ENCODE measurements at regions of chr11 and their contacts with region 1.

Region 1: GRCh38 chr11:126716456-126717083 is 284.0 kb downstream of the KIRREL3 start:
- DNase-seq: peak; percentile 26
- ATAC-seq: peak; percentile 92
- H3K4me3 ChIP-seq: no peak overlapping the region
- H3K27ac ChIP-seq: no peak overlapping the region
- H3K4me1 ChIP-seq: no peaks in the 10 kb centered on the region
- H3K27me3 ChIP-seq: peaks cover 42% of the 10 kb centered on the region
- CTCF ChIP-seq: peak; percentile 36 to 76 (median 72); a peak in 5 of 6 replicates
- POLR2A ChIP-seq: no peak
- RAD21 ChIP-seq: peak; percentile 66

Region 2: GRCh38 chr11:126655807-126656128 is 60.8 kb before region 1 on chr11:
- CTCF ChIA-PET with region 1: no interaction called
- POLR2A ChIA-PET with region 1: no interaction called
- RAD21 ChIA-PET with region 1: no interaction called
- intact Hi-C with region 1: no loop called
- DNase-seq: no peak
- ATAC-seq: no peak
- H3K4me3 ChIP-seq: no peak overlapping the region
- H3K27ac ChIP-seq: no peak overlapping the region
- H3K4me1 ChIP-seq: no peaks in the 10 kb centered on the region
- H3K27me3 ChIP-seq: peaks cover 38% of the 10 kb centered on the region
- CTCF ChIP-seq: no peak
- POLR2A ChIP-seq: no peak
- RAD21 ChIP-seq: no peak

Region 3: GRCh38 chr11:126782810-126783209 is 66.2 kb after region 1 on chr11:
- CTCF ChIA-PET with region 1: no interaction called
- POLR2A ChIA-PET with region 1: no interaction called
- RAD21 ChIA-PET with region 1: no interaction called
- intact Hi-C with region 1: loop called (anchors 10 kb)
- DNase-seq: no peak
- ATAC-seq: no peak
- H3K4me3 ChIP-seq: no peak overlapping the region
- H3K27ac ChIP-seq: no peak overlapping the region
- H3K4me1 ChIP-seq: no peaks in the 10 kb centered on the region
- H3K27me3 ChIP-seq: peaks cover 21% of the 10 kb centered on the region
- CTCF ChIP-seq: no peak
- POLR2A ChIP-seq: no peak
- RAD21 ChIP-seq: no peak

Region 4: GRCh38 chr11:126989942-126990715 is 273.6 kb after region 1 on chr11:
- CTCF ChIA-PET with region 1: no interaction called
- POLR2A ChIA-PET with region 1: no interaction called
- RAD21 ChIA-PET with region 1: no interaction called
- intact Hi-C with region 1: loop called (anchors 1 kb)
- DNase-seq: peak; percentile 18
- ATAC-seq: peak; percentile 97
- H3K4me3 ChIP-seq: no peak overlapping the region
- H3K27ac ChIP-seq: no peak overlapping the region
- H3K4me1 ChIP-seq: no peaks in the 10 kb centered on the region
- H3K27me3 ChIP-seq: 0 out of 2 replicates have a peak, but pooled peaks cover 6% of the 10 kb centered on the region
- CTCF ChIP-seq: peak; percentile 49 to 96 (median 85); a peak in 5 of 6 replicates
- POLR2A ChIP-seq: no peak
- RAD21 ChIP-seq: peak; percentile 82

Region 5: DNA sequence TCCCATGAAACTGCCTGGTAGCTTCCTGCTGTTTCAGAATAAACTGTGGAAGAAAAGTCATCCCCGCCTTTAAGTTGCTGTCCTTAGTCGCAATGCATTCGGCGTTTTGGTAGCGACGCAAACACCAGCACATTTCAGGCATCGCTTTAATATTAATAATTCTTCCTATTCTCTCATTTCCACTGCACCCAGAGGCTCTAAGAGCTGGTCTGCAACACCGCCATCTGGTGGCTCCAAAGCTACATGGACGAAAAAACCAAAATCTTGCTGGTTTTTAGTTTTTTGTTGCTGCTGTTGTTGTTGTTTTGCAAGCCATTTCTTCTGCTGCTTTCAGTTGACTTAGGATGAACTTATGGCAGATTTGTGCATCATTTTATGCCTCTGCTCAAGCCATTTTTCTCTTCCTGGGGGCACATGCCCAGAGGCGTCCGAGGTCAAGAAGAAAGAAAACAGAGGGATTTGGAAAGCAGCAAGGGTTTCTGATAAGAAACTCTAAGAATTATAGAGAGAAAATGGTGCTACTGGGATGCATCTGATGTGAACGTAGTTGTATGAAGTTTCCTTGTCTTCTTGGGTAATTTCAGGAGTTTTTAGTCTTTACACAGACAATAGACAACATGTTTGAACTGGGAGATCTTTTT is 629.4 kb after region 1 on chr11:
- CTCF ChIA-PET with region 1: no interaction called
- POLR2A ChIA-PET with region 1: no interaction called
- RAD21 ChIA-PET with region 1: no interaction called
- intact Hi-C with region 1: loop called (anchors 5 kb)
- DNase-seq: no peak
- ATAC-seq: no peak
- H3K4me3 ChIP-seq: no peak overlapping the region
- H3K27ac ChIP-seq: no peak overlapping the region
- H3K4me1 ChIP-seq: no peaks in the 10 kb centered on the region
- H3K27me3 ChIP-seq: no peaks in the 10 kb centered on the region
- CTCF ChIP-seq: peak in 2 of 3 experiments; percentile 52 to 57; a peak in 4 of 6 replicates
- POLR2A ChIP-seq: no peak
- RAD21 ChIP-seq: peak; percentile 22; the same call in 1 of the 2 replicates

Measured in HCT116 (cell line).